Natural killer cell (primary cell): ENCODE measurements at regions of chr4 and their contacts with region 1.

Region 1: DNA sequence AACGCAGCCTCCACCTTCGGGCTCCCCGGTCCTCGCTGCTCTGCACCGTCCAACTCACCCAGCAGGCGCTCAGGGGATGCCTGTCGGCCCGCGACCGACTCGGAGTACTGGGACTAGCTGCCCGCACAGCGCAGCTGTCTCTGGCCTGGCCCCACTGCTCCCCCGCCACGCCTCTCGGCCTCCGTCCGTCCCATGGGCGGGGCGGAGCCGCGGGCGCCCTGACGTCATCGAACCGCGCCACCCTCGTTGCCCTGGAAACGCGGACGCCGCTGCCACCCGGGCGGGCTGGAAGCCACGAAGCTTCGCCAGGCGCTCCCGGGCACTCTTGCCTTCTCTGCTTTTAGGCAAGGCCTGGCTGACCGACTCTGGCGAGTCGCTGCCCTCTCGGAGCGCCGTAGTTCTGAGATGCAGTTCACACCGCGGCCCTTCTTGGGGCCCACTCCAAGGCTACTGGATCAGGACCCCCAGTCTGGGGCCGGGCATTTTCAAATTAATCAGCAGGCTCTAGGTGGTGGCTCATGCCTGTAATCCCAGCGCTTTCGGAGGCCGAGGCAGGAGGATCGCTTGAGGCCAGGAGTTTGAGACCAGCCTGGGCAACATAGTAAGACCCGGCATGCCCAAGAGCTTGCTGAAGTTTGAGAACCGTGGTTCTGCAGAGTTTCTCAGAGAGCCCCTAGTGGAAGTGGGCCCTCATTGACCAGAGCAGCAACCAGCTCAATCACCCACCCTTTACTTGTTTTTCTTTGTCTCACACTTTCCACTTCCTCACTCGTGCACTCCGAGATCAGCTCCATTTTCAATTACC is 12.0 kb downstream of the ACOX3 start:
- DNase-seq: peak; percentile 94 to 98
- ATAC-seq: peak; percentile 95 to 98 (median 96)
- H3K4me3 ChIP-seq: peak overlapping the region; percentile 71
- H3K4me3 Mint-ChIP-seq: peak overlapping the region; percentile 95
- H3K27ac ChIP-seq: peak overlapping the region; percentile 32
- H3K27ac Mint-ChIP-seq: peak overlapping the region; percentile 94 to 96
- H3K4me1 ChIP-seq: peaks cover 16% of the 10 kb centered on the region
- H3K4me1 Mint-ChIP-seq: peaks cover 29 to 32% of the 10 kb centered on the region in 2 donors
- H3K27me3 ChIP-seq: no peaks in the 10 kb centered on the region
- H3K27me3 Mint-ChIP-seq: no peaks in the 10 kb centered on the region
- CTCF ChIP-seq: no peak

Region 2: DNA sequence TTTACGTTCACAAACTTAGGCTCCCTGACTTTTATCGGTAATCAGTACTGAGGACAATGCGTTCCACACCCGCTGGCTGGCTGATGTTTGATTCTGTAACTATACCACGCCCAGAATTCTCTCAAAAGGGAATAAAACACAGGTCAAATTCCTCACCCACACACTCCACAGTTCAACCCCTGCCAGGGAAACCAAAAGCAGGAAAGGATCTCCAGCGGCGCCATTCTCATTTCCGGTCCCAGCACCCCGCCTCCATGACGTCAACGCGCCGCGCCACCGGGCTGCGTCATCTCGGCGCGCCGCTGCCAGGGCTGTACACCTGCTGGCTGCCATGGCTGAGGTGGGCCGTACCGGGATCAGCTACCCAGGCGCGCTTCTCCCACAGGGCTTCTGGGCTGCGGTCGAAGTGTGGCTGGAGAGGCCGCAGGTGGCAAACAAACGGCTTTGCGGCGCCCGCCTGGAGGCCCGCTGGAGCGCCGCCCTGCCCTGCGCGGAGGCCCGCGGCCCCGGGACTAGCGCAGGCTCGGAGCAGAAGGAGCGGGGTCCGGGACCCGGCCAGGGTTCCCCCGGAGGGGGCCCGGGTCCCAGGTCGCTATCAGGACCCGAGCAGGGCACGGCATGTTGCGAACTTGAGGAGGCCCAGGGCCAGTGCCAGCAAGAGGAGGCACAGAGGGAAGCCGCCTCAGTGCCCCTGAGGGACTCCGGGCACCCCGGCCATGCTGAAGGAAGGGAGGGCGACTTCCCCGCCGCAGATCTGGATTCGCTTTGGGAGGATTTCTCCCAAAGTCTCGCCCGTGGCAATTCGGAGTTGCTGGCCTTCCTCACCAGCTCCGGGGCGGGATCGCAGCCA is 12.2 kb after region 1 on chr4 and contains the starts of genes ACOX3 and TRMT44:
- intact Hi-C with region 1: loop called (anchors 1 kb)
- DNase-seq: peak; percentile 96 to 100
- ATAC-seq: peak; percentile 93 to 94 (median 93)
- H3K4me3 ChIP-seq: peak within 1 kb of the TSS; percentile 90
- H3K4me3 Mint-ChIP-seq: peak within 1 kb of the TSS; percentile 99
- H3K27ac ChIP-seq: peak within 1 kb of the TSS; percentile 98
- H3K27ac Mint-ChIP-seq: peak within 1 kb of the TSS; percentile 99
- H3K4me1 ChIP-seq: peaks cover 36% of the 10 kb centered on the region
- H3K4me1 Mint-ChIP-seq: peaks cover 68 to 78% of the 10 kb centered on the region in 2 donors
- H3K27me3 ChIP-seq: no peaks in the 10 kb centered on the region
- H3K27me3 Mint-ChIP-seq: no peaks in the 10 kb centered on the region
- CTCF ChIP-seq: no peak
- total RNA-seq, gene ACOX3: 12.4 to 18.3 (median 15.4) TPM
- total RNA-seq, gene TRMT44: 24.4 to 37.5 (median 34.3) TPM

Region 3: GRCh38 chr4:8459867-8460447 is 31.5 kb after region 1 on chr4:
- intact Hi-C with region 1: no loop called
- DNase-seq: no peak
- ATAC-seq: no peak
- H3K4me3 ChIP-seq: no peak overlapping the region
- H3K4me3 Mint-ChIP-seq: no peak overlapping the region
- H3K27ac ChIP-seq: no peak overlapping the region
- H3K27ac Mint-ChIP-seq: no peak overlapping the region
- H3K4me1 ChIP-seq: no peaks in the 10 kb centered on the region
- H3K4me1 Mint-ChIP-seq: no peaks in the 10 kb centered on the region
- H3K27me3 ChIP-seq: no peaks in the 10 kb centered on the region
- H3K27me3 Mint-ChIP-seq: no peaks in the 10 kb centered on the region
- CTCF ChIP-seq: no peak